ENCODE measurements at regions of chr1 and their contacts with region 1.

Region 1: DNA sequence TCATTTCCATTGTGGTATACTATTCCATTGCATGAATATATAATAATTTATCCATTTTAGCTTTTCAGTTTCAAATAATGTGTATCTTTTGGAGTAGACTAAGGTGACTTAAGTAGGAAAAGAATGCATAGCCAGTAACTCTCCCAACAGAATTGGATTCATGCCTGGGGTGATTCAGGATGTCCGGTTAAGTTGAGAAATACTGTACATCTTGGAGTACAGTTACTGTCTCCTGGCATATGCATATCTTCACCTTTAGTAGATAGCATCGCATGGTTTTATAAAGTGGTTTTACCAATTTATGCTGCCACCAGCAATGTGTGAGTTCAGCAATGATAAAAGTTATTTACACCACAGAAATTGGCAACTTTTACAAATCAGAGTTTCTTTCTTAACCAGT is 18.6 kb upstream of the SLC6A9 start:
- DNase-seq: no peak
- ATAC-seq: no peak

Region 2: GRCh38 chr1:43529206-43529731 is 520.6 kb before region 1 on chr1:
- intact Hi-C with region 1: loop called (anchors 5 kb)
- DNase-seq: peak; percentile 92
- ATAC-seq: peak; percentile 68

Region 3: DNA sequence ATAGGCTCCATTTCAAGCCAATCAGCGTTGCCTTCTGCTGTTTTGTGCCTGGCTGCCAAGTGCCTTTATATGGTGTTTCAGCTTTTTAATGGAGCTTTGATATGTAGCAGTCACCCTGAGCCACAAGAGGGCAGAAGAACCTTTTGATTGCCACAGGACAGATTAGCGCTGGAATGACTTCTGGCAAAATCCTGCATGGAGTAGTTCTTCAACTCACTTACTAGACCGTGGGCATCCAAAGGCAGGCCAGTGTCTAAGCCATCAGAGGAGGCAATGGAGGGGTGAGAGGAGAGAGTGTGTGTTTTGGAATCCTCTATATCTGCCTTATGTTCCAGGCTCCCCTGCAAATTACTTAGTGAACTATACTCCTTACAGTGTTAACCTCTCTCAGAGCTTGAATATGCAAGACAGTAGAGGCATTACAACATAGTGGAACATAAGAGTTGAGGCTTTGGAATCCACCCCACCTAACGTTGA is 286.3 kb before region 1 on chr1:
- intact Hi-C with region 1: loop called (anchors 5 kb)
- DNase-seq: no peak
- ATAC-seq: peak; percentile 94

Region 4: GRCh38 chr1:43936431-43937151 is 113.2 kb before region 1 on chr1:
- intact Hi-C with region 1: no loop called
- DNase-seq: no peak
- ATAC-seq: peak; percentile 24

Region 5: GRCh38 chr1:44002606-44003157 is 47.2 kb before region 1 on chr1:
- intact Hi-C with region 1: loop called (anchors 1 kb)
- DNase-seq: no peak
- ATAC-seq: no peak